IMR-90 (cell line): ENCODE measurements at regions of chr6 and their contacts with region 1.

Region 1: DNA sequence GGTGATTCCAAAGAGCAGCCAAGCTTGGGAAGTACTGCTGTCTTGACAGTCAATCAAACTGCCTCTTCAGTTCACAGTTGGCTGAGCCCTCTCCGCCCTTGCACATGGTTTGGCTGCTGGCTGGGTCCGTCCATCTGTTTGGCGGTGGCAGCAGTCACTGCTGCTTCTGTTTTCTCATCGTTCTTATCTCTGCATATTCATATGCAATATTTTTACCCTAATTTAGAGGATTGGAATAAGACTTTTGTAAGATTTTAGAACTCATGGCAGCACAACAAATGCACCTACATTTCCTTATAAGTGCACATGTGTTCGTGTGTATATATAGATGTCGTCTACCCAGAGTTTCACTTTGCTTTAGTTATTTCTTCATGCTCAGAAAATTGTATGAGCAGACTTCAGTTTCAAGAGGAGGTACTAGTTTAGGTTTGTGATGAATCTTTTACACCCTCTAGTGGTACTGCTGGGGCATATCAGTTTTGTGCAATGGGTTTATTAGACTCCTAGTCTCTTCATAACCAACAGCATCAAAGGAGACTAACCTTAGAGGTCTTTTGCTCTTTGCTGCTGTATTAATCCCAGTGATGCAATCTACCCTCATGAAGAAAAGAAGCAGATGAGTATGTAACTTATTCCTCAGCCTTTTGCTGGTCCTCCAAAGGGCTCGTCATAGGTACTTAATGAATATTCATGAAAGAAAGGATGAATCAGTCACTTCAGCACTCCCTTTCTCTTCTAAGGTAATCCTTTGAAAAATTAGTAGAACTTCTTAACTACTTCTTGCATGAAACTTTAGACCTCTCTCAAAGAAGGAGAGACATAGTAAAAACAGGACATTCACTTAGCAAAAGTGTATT is 44.3 kb downstream of the KHDC1L start:
- DNase-seq: peak; percentile 84
- ATAC-seq: peak; percentile 98
- H3K4me3 ChIP-seq: peak overlapping the region; percentile 42
- H3K27ac ChIP-seq: no peak overlapping the region
- H3K4me1 ChIP-seq: 0 out of 2 replicates have a peak, but pooled peaks cover 2% of the 10 kb centered on the region
- H3K27me3 ChIP-seq: peaks cover 2% of the 10 kb centered on the region
- CTCF ChIP-seq: peak; percentile 90
- POLR2A ChIP-seq: no peak
- RAD21 ChIP-seq: peak; percentile 91

Region 2: DNA sequence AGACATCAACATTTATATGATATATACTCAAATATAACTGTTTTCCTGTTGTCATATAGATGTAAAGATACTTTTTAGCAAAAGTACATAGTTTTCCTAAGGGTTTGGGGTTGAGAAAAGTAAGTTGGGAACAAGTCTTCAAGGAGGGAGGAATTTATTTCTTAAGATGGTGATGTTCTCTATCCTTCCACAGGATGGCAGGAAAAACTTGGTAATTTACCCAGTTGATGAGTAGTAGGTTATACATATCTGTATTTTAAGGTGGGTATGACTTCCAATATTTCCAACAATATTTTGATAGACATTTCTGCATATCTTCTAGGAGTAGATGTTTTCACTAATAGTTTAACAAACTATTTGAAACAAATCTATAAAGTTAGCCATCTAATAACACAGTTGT is 1040.2 kb before region 1 on chr6:
- CTCF ChIA-PET with region 1: no interaction called
- POLR2A ChIA-PET with region 1: no interaction called
- dilution Hi-C with region 1: no loop called
- in situ Hi-C with region 1: no loop called
- intact Hi-C with region 1: loop called (anchors 10 kb)
- DNase-seq: peak; percentile 38
- ATAC-seq: peak; percentile 66
- H3K4me3 ChIP-seq: no peak overlapping the region
- H3K27ac ChIP-seq: no peak overlapping the region
- H3K4me1 ChIP-seq: no peaks in the 10 kb centered on the region; the same call in 1 of the 2 replicates
- H3K27me3 ChIP-seq: no peaks in the 10 kb centered on the region
- CTCF ChIP-seq: peak; percentile 37
- POLR2A ChIP-seq: no peak
- RAD21 ChIP-seq: peak; percentile 29; the same call in 1 of the 2 replicates

Region 3: DNA sequence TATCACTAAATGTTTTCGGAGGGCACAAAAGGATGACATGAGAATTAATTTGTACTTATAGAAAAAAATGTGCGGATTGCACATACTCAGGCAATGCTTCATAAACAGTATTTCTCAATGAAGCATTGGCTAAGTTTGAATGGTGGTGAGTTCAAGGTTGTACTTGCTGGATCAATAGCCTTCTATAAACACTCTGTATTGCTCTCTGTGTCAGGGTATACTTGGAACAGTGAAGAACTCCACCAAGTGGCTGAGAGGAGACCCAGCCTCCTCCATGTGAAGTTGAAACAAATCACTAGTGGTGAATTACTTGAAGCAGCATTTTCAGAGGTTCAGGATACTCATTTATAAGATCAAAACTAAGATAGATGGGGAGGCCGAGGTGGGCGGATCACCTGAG is 934.1 kb before region 1 on chr6:
- CTCF ChIA-PET with region 1: no interaction called
- POLR2A ChIA-PET with region 1: no interaction called
- dilution Hi-C with region 1: no loop called
- in situ Hi-C with region 1: no loop called
- intact Hi-C with region 1: loop called (anchors 2 kb)
- DNase-seq: peak; percentile 15
- ATAC-seq: peak; percentile 49
- H3K4me3 ChIP-seq: no peak overlapping the region
- H3K27ac ChIP-seq: no peak overlapping the region
- H3K4me1 ChIP-seq: peaks cover 2% of the 10 kb centered on the region; the same call in 1 of the 2 replicates
- H3K27me3 ChIP-seq: no peaks in the 10 kb centered on the region
- CTCF ChIP-seq: no peak
- POLR2A ChIP-seq: no peak
- RAD21 ChIP-seq: no peak

Region 4: DNA sequence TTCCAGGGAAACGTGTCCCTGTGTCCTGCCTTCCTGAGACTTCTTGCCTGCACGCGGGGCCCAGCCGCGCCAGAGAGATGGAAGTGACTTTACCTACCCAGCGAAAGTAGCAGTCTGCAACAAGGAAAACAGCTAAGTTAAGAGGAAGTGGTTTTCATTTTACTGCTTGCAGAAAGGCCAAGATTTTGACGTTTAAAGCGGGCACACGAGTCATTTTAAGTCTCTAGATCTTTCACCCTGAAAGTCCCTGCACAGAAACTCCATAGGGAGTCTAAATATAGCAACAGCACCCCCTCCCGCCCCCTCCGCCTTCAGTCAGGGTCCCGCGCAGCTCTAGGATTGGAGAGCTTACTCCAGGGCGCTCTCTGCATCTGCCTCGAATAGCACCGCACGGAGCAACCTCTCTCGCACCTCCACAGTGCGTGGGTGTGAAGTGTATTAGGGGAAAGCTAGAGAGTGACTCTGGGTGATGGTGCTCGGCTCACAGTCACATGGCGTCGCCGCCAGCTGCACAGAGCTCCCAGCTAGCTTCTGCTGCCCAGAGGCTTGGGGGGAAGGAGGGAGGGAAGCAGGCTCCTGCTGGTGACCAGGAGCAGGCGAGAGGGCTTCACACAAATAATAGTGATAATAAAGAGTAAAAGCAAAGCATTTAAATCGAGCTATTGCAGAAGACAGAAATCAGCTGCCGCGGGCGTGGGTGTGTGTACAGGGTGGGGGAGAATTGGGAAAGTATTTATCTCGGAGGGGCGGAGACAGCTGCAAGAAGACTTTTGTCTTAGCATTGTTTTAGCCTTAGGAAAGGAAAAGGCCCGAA is 560.9 kb before region 1 on chr6:
- CTCF ChIA-PET with region 1: interaction called, 3 read pairs
- POLR2A ChIA-PET with region 1: no interaction called
- dilution Hi-C with region 1: no loop called
- in situ Hi-C with region 1: no loop called
- intact Hi-C with region 1: loop called (anchors 1 kb)
- DNase-seq: peak; percentile 45
- ATAC-seq: peak; percentile 9
- H3K4me3 ChIP-seq: peak overlapping the region; percentile 27
- H3K27ac ChIP-seq: no peak overlapping the region
- H3K4me1 ChIP-seq: 0 out of 2 replicates have a peak, but pooled peaks cover 2% of the 10 kb centered on the region
- H3K27me3 ChIP-seq: no peaks in the 10 kb centered on the region
- CTCF ChIP-seq: no peak
- POLR2A ChIP-seq: no peak
- RAD21 ChIP-seq: no peak

Region 5: DNA sequence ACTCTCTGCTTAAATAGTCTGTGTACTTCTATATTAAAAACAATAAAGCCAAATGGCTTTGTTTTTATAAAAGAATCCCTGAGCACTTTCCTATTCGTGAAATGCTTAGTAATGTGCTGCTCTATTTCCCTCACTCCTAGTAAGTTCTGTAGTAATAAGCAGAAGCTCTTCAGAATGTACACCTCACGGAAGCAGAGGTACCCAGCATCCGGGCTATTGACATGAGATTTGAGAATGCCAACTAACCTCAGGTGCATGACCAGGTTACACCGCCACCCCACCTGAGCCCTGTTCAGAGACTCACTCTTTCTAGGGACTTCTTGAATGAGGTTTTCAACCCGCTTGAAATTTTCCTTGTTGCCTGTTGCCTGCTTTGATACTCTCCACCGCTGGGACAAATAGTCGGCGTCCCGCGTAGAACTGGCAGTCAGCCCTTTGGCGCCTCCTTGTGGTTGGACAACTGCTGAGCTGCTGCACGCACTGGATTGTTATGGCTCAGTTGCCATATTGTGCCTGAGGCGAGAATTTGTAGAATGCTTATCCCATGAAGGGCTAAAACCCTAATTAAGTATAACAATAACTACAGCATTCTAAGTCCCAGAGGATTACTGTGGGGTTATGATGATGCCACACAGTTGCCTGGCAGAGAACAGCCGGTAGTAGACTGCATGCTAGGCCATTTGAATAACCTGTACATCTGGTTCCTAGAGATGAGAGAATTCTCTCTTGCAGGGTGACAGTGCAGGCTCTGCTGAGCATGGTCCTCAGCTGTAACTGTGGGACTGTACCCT is 51.1 kb before region 1 on chr6:
- CTCF ChIA-PET with region 1: no interaction called
- POLR2A ChIA-PET with region 1: no interaction called
- dilution Hi-C with region 1: no loop called
- in situ Hi-C with region 1: no loop called
- intact Hi-C with region 1: loop called (anchors 2 kb)
- DNase-seq: peak; percentile 66
- ATAC-seq: peak; percentile 95
- H3K4me3 ChIP-seq: no peak overlapping the region
- H3K27ac ChIP-seq: no peak overlapping the region
- H3K4me1 ChIP-seq: peaks cover 8% of the 10 kb centered on the region
- H3K27me3 ChIP-seq: no peaks in the 10 kb centered on the region
- CTCF ChIP-seq: peak; percentile 97
- POLR2A ChIP-seq: peak; percentile 60; the same call in 1 of the 2 replicates
- RAD21 ChIP-seq: peak; percentile 98

Region 6: GRCh38 chr6:73329201-73329600 is 148.2 kb after region 1 on chr6:
- CTCF ChIA-PET with region 1: no interaction called
- POLR2A ChIA-PET with region 1: no interaction called
- dilution Hi-C with region 1: no loop called
- in situ Hi-C with region 1: no loop called
- intact Hi-C with region 1: loop called (anchors 5 kb)
- DNase-seq: no peak
- ATAC-seq: no peak
- H3K4me3 ChIP-seq: no peak overlapping the region
- H3K27ac ChIP-seq: no peak overlapping the region
- H3K4me1 ChIP-seq: no peaks in the 10 kb centered on the region
- H3K27me3 ChIP-seq: peaks cover 9% of the 10 kb centered on the region
- CTCF ChIP-seq: no peak
- POLR2A ChIP-seq: no peak
- RAD21 ChIP-seq: no peak